WTC11 (cell line): ENCODE measurements at regions of chr7 and their contacts with region 1.

Region 1: GRCh38 chr7:101094416-101095375 is 9.4 kb downstream of the TRIM56 start:
- DNase-seq: peak; percentile 78
- ATAC-seq: peak; percentile 89
- H3K4me3 Mint-ChIP-seq: no peak overlapping the region
- H3K27ac Mint-ChIP-seq: no peak overlapping the region
- H3K4me1 Mint-ChIP-seq: peaks cover 14% of the 10 kb centered on the region
- H3K27me3 Mint-ChIP-seq: no peaks in the 10 kb centered on the region
- CTCF ChIP-seq: peak; percentile 73

Region 2: DNA sequence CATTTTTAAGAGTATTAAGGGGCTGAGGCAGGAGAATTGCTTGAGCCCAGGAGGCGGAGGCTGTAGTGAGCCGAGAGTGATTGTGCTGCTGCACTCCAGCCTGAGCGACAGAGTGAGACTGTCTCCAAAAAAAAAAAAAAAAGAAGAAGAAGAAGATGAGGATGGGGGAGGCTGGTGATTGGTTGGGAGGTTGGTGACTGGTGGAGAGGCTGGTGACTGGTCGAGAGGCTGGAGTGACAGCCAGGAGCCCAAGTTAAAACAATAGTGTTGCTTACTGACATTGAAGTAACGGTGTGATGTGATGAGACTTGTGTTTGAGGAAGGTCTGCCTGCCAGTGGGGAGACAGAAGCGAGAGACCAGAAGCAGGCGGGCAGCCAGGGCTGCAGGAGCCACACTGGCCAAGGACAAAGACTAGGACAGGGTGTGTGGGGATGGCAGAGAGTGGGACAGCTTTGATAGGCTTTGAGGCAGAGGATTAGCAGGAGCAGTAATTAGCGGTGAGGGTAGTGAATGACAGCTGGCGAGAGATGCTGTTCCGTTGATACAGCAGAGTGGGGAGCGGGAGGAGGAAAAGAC is 214.9 kb before region 1 on chr7:
- CTCF ChIA-PET with region 1: no interaction called
- POLR2A ChIA-PET with region 1: no interaction called
- DNase-seq: no peak
- ATAC-seq: no peak
- H3K4me3 Mint-ChIP-seq: no peak overlapping the region
- H3K27ac Mint-ChIP-seq: peak overlapping the region; percentile 52
- H3K4me1 Mint-ChIP-seq: peaks cover 20% of the 10 kb centered on the region
- H3K27me3 Mint-ChIP-seq: no peaks in the 10 kb centered on the region
- CTCF ChIP-seq: no peak

Region 3: DNA sequence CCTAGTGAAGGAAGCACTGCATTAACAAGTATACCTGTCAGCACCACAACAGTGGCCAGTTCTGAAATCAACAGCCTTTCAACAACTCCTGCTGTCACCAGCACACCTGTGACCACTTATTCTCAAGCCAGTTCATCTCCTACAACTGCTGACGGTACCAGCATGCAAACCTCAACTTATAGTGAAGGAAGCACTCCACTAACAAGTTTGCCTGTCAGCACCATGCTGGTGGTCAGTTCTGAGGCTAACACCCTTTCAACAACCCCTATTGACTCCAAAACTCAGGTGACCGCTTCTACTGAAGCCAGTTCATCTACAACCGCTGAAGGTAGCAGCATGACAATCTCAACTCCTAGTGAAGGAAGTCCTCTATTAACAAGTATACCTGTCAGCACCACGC is 58.8 kb before region 1 on chr7:
- CTCF ChIA-PET with region 1: no interaction called
- POLR2A ChIA-PET with region 1: no interaction called
- DNase-seq: no peak
- ATAC-seq: no peak
- H3K4me3 Mint-ChIP-seq: no peak overlapping the region
- H3K27ac Mint-ChIP-seq: no peak overlapping the region
- H3K4me1 Mint-ChIP-seq: no peaks in the 10 kb centered on the region
- H3K27me3 Mint-ChIP-seq: peaks cover under 1% of the 10 kb centered on the region; the same call in 1 of the 2 replicates
- CTCF ChIP-seq: no peak

Region 4: DNA sequence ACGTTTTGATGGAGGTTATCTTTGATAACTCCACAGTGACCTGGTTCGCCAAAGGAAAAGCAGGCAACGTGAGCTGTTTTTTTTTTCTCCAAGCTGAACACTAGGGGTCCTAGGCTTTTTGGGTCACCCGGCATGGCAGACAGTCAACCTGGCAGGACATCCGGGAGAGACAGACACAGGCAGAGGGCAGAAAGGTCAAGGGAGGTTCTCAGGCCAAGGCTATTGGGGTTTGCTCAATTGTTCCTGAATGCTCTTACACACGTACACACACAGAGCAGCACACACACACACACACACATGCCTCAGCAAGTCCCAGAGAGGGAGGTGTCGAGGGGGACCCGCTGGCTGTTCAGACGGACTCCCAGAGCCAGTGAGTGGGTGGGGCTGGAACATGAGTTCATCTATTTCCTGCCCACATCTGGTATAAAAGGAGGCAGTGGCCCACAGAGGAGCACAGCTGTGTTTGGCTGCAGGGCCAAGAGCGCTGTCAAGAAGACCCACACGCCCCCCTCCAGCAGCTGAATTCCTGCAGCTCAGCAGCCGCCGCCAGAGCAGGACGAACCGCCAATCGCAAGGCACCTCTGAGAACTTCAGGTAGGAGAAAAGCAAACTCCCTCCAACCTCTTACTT is 32.1 kb after region 1 on chr7 and contains the start of gene SERPINE1:
- CTCF ChIA-PET with region 1: interaction called, 14 read pairs
- POLR2A ChIA-PET with region 1: no interaction called
- DNase-seq: peak; percentile 61
- ATAC-seq: peak; percentile 83
- H3K4me3 Mint-ChIP-seq: peak within 1 kb of the TSS; percentile 32
- H3K27ac Mint-ChIP-seq: no peak within 1 kb of the TSS
- H3K4me1 Mint-ChIP-seq: peaks cover 41% of the 10 kb centered on the region
- H3K27me3 Mint-ChIP-seq: peaks cover 17% of the 10 kb centered on the region
- CTCF ChIP-seq: no peak
- total RNA-seq, gene SERPINE1: 1.1 to 2.6 TPM (median 2.2 TPM) in 3 replicates

Region 5: DNA sequence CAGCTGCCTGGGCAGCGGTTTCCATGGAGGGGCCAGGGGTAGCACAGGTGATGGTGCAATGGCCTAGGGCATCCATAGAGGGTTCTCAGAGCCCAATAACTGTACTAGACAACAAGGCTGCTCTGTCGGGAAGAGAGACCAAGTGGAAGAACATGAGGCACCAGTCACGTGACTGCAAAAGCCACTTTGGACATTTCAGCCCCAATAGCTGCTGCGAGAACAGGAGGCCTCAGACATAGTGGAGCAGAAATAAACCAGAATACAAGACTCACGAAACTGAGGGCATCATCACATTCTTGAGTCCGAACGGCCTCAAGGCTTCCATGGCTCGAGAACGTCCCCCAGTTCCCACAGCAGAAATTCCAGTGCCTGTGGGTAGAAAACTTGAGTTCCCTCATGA is 182.5 kb after region 1 on chr7:
- CTCF ChIA-PET with region 1: no interaction called
- POLR2A ChIA-PET with region 1: no interaction called
- DNase-seq: no peak
- ATAC-seq: no peak
- H3K4me3 Mint-ChIP-seq: no peak overlapping the region
- H3K27ac Mint-ChIP-seq: peak overlapping the region; percentile 19; the same call in 1 of the 2 replicates
- H3K4me1 Mint-ChIP-seq: peaks cover 13% of the 10 kb centered on the region
- H3K27me3 Mint-ChIP-seq: no peaks in the 10 kb centered on the region
- CTCF ChIP-seq: no peak